ENCODE measurements at regions of chr3 and their contacts with region 1.

Region 1: DNA sequence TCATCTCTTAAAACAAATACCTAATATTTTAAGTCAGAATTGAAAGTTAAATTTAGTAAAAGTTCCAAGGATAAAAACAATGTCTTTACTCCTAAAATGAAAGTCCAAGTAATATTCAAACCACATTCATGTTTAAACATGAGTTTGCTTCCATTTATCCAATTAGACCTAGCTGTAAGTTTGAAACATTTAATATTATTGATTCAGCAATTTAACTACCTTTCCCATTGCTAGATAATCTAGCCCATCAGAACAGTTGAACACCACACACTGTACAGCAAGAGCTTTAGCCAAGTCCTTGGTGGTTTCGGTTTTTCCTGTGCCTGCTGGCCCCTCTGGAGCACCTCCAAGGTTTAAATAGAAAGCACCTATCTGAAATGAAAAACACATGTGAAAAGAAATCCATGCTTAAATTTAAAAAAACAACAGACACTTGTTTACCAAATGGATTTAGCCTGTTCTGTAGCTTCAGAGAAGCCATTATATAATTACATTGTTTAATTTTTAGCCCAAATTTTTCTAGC is 97.8 kb downstream of the DNAH12 start:
- DNase-seq: no peak
- H3K4me3 ChIP-seq: no peak overlapping the region
- H3K27ac ChIP-seq: no peak overlapping the region
- H3K4me1 ChIP-seq: peaks cover 0 to 3% (median under 1%) of the 10 kb centered on the region in 4 experiments; a peak in 1 of 7 replicates
- H3K27me3 ChIP-seq: no peaks in the 10 kb centered on the region
- CTCF ChIP-seq: no peak
- EP300 ChIP-seq: no peak
- POLR2A ChIP-seq: no peak
- RAD21 ChIP-seq: no peak

Region 2: GRCh38 chr3:57331078-57331610 is 115.2 kb before region 1 on chr3:
- CTCF ChIA-PET with region 1: no interaction called
- POLR2A ChIA-PET with region 1: no interaction called
- DNase-seq: no peak
- H3K4me3 ChIP-seq: no peak overlapping the region
- H3K27ac ChIP-seq: no peak overlapping the region
- H3K4me1 ChIP-seq: no peaks in the 10 kb centered on the region
- H3K27me3 ChIP-seq: no peaks in the 10 kb centered on the region
- CTCF ChIP-seq: no peak
- EP300 ChIP-seq: no peak
- POLR2A ChIP-seq: no peak
- RAD21 ChIP-seq: no peak

Region 3: GRCh38 chr3:57434041-57434440 is 12.3 kb before region 1 on chr3:
- CTCF ChIA-PET with region 1: interaction called, 15 read pairs
- POLR2A ChIA-PET with region 1: no interaction called
- DNase-seq: no peak
- H3K4me3 ChIP-seq: no peak overlapping the region
- H3K27ac ChIP-seq: no peak overlapping the region
- H3K4me1 ChIP-seq: no peaks in the 10 kb centered on the region
- H3K27me3 ChIP-seq: no peaks in the 10 kb centered on the region
- CTCF ChIP-seq: peak in 2 of 3 experiments; percentile 43 to 58; a peak in 2 of 4 replicates
- EP300 ChIP-seq: no peak
- POLR2A ChIP-seq: no peak
- RAD21 ChIP-seq: peak; percentile 55 to 67

Measured in H1 (cell line).